ENCODE measurements at regions of chr1 and their contacts with region 1.

Region 1: DNA sequence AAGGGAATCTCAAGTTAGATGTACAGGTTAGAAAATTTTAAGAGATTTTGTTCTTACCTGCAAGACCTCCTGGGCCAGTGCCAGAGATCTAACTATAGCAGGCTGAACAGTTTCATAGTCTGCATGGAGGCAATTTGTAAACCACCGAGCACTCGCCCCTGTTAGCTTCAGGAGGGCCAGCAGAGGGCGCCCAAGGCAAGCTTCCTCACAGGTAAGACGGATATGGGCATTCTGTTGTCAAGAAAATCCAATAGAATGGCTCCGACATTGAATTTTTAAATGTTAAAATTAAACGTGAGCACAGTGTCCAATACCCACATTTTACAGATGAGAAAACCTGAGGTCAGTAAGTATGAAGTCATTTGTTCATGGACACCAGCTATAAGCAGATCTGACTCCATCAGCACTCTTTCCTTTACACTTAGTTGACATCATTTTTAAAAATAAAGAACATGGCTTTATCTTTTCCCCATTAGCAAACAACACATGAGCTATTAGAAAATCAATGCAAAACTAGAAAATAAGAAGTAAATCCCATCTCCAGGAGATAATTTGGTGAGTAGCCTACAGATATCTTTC is 2.2 kb downstream of the REG4 start:
- DNase-seq: peak; percentile 74
- ATAC-seq: peak; percentile 96
- H3K4me3 Mint-ChIP-seq: no peak overlapping the region
- H3K27ac Mint-ChIP-seq: no peak overlapping the region
- H3K4me1 Mint-ChIP-seq: 0 out of 2 replicates have a peak, but pooled peaks cover 3% of the 10 kb centered on the region
- H3K27me3 Mint-ChIP-seq: no peaks in the 10 kb centered on the region
- CTCF ChIP-seq: peak; percentile 78

Region 2: DNA sequence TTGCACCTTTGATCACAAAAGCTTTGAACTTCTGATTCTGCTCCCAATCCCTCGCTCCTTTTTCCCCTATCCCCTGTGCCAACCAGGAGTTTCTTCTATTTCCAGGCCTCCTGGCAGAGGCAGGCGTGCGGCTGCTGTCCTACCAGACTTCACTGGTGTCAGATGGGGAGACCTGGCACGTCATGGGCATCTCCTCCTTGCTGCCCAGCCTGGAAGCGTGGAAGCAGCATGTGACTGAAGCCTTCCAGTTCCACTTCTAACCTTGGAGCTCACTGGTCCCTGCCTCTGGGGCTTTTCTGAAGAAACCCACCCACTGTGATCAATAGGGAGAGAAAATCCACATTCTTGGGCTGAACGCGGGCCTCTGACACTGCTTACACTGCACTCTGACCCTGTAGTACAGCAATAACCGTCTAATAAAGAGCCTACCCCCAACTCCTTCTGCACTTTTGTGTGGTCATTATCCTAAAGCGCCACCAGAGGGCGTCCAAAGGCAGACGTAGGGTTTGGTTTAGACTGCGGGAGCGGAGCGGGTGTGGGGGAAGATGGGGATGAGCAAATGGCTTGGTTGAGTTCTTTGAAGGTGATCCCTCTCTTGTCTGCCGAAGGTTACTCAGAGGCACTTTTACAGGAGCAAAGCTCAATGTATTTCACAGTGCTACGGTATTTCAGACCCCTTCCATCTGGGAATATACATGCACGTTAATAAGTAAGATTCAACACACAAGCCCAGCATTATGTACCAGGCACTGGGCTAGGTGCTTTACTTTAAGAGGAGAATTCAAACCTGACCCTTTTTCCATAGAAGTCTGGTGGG is 65.1 kb before region 1 on chr1:
- CTCF ChIA-PET with region 1: interaction called, 14 read pairs
- POLR2A ChIA-PET with region 1: no interaction called
- DNase-seq: peak; percentile 71
- ATAC-seq: peak; percentile 78
- H3K4me3 Mint-ChIP-seq: no peak overlapping the region
- H3K27ac Mint-ChIP-seq: peak overlapping the region; percentile 91
- H3K4me1 Mint-ChIP-seq: peaks cover 32% of the 10 kb centered on the region
- H3K27me3 Mint-ChIP-seq: no peaks in the 10 kb centered on the region
- CTCF ChIP-seq: peak; percentile 83

Region 3: GRCh38 chr1:119795261-119796200 is 13.5 kb before region 1 on chr1:
- CTCF ChIA-PET with region 1: interaction called, 21 read pairs
- POLR2A ChIA-PET with region 1: no interaction called
- DNase-seq: no peak
- ATAC-seq: no peak
- H3K4me3 Mint-ChIP-seq: no peak overlapping the region
- H3K27ac Mint-ChIP-seq: no peak overlapping the region
- H3K4me1 Mint-ChIP-seq: no peaks in the 10 kb centered on the region
- H3K27me3 Mint-ChIP-seq: no peaks in the 10 kb centered on the region
- CTCF ChIP-seq: no peak

Region 4: GRCh38 chr1:119870917-119871596 is 62.0 kb after region 1 on chr1:
- CTCF ChIA-PET with region 1: interaction called, 11 read pairs
- POLR2A ChIA-PET with region 1: no interaction called
- DNase-seq: peak; percentile 97
- ATAC-seq: peak; percentile 98
- H3K4me3 Mint-ChIP-seq: no peak overlapping the region
- H3K27ac Mint-ChIP-seq: no peak overlapping the region
- H3K4me1 Mint-ChIP-seq: peaks cover 4% of the 10 kb centered on the region
- H3K27me3 Mint-ChIP-seq: peaks cover 6% of the 10 kb centered on the region
- CTCF ChIP-seq: peak; percentile 93

Measured in WTC11 (cell line).